HCT116 (cell line): ENCODE measurements at regions of chr9 and their contacts with region 1.

Region 1: GRCh38 chr9:29928072-29928471 is 2354.8 kb upstream of the C9orf72 start:
- DNase-seq: no peak
- ATAC-seq: no peak
- H3K4me3 ChIP-seq: no peak overlapping the region
- H3K27ac ChIP-seq: no peak overlapping the region
- H3K4me1 ChIP-seq: no peaks in the 10 kb centered on the region
- H3K27me3 ChIP-seq: no peaks in the 10 kb centered on the region
- CTCF ChIP-seq: no peak
- POLR2A ChIP-seq: no peak
- RAD21 ChIP-seq: no peak

Region 2: GRCh38 chr9:29981013-29981412 is 52.9 kb after region 1 on chr9:
- CTCF ChIA-PET with region 1: no interaction called
- POLR2A ChIA-PET with region 1: no interaction called
- RAD21 ChIA-PET with region 1: no interaction called
- intact Hi-C with region 1: loop called (anchors 10 kb)
- DNase-seq: no peak
- ATAC-seq: no peak
- H3K4me3 ChIP-seq: no peak overlapping the region
- H3K27ac ChIP-seq: no peak overlapping the region
- H3K4me1 ChIP-seq: no peaks in the 10 kb centered on the region
- H3K27me3 ChIP-seq: no peaks in the 10 kb centered on the region
- CTCF ChIP-seq: no peak
- POLR2A ChIP-seq: no peak
- RAD21 ChIP-seq: no peak

Region 3: GRCh38 chr9:30015073-30015472 is 87.0 kb after region 1 on chr9:
- CTCF ChIA-PET with region 1: no interaction called
- POLR2A ChIA-PET with region 1: no interaction called
- RAD21 ChIA-PET with region 1: no interaction called
- intact Hi-C with region 1: loop called (anchors 10 kb)
- DNase-seq: no peak
- ATAC-seq: no peak
- H3K4me3 ChIP-seq: no peak overlapping the region
- H3K27ac ChIP-seq: no peak overlapping the region
- H3K4me1 ChIP-seq: no peaks in the 10 kb centered on the region
- H3K27me3 ChIP-seq: no peaks in the 10 kb centered on the region
- CTCF ChIP-seq: no peak
- POLR2A ChIP-seq: no peak
- RAD21 ChIP-seq: no peak